ENCODE measurements at regions of chr5 and their contacts with region 1.

Region 1: GRCh38 chr5:138178516-138179276 is at the starts of genes BRD8 and KIF20A:
- DNase-seq: peak; percentile 95
- H3K4me3 ChIP-seq: peak within 1 kb of the TSS; percentile 88
- H3K27ac ChIP-seq: peak within 1 kb of the TSS; percentile 76
- H3K4me1 ChIP-seq: peaks cover 17% of the 10 kb centered on the region
- CTCF ChIP-seq: no peak
- total RNA-seq, gene BRD8: 57.7 and 71.7 TPM in 2 replicates
- total RNA-seq, gene KIF20A: 63.1 and 74.5 TPM in 2 replicates

Region 2: GRCh38 chr5:138132543-138132942 is 46.2 kb before region 1 on chr5:
- CTCF ChIA-PET with region 1: no interaction called
- POLR2A ChIA-PET with region 1: no interaction called
- intact Hi-C with region 1: no loop called
- DNase-seq: no peak
- H3K4me3 ChIP-seq: peak overlapping the region; percentile 42
- H3K27ac ChIP-seq: no peak overlapping the region
- H3K4me1 ChIP-seq: no peaks in the 10 kb centered on the region
- CTCF ChIP-seq: no peak

Region 3: GRCh38 chr5:138213161-138214029 is 34.7 kb after region 1 on chr5 and contains the start of gene CDC23:
- CTCF ChIA-PET with region 1: no interaction called
- POLR2A ChIA-PET with region 1: interaction called, 5 read pairs
- intact Hi-C with region 1: loop called (anchors 2 kb)
- DNase-seq: peak; percentile 98
- H3K4me3 ChIP-seq: peak within 1 kb of the TSS; percentile 97
- H3K27ac ChIP-seq: peak within 1 kb of the TSS; percentile 43
- H3K4me1 ChIP-seq: peaks cover 15% of the 10 kb centered on the region
- CTCF ChIP-seq: no peak
- total RNA-seq, gene CDC23: 31.8 and 46.7 TPM in 2 replicates

Region 4: GRCh38 chr5:138337685-138338410 is 159.2 kb after region 1 on chr5 and contains the start of gene FAM53C:
- CTCF ChIA-PET with region 1: no interaction called
- POLR2A ChIA-PET with region 1: interaction called, 5 read pairs
- intact Hi-C with region 1: loop called (anchors 5 kb)
- DNase-seq: peak; percentile 96
- H3K4me3 ChIP-seq: peak within 1 kb of the TSS; percentile 89
- H3K27ac ChIP-seq: peak within 1 kb of the TSS; percentile 67
- H3K4me1 ChIP-seq: peaks cover 26% of the 10 kb centered on the region
- CTCF ChIP-seq: 0 out of 2 replicates have a peak, but pooled peaks have one; percentile 23
- total RNA-seq, gene FAM53C: 38.4 and 42.3 TPM in 2 replicates

Region 5: DNA sequence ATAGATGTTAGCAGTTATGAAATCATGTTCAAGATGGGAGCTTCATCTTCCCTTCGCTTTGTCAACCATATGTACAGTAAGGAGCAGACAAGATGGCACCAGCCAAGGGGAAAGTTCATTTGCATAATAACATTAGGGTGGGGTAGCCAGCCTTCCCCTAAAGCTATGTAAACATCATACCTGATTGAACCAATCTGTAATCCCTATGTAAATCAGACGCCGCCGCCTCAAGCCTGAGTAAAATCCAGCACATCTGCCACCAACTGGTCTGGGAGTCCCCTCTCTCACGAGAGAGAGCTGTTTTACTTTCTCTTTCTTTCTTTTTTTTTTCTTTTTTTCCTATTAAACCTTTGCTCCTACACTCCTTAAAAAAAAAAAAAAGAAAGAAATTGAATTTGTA is 229.3 kb after region 1 on chr5:
- CTCF ChIA-PET with region 1: interaction called, 3 read pairs
- POLR2A ChIA-PET with region 1: no interaction called
- intact Hi-C with region 1: loop called (anchors 1 kb)
- DNase-seq: peak; percentile 4
- H3K4me3 ChIP-seq: no peak overlapping the region
- H3K27ac ChIP-seq: no peak overlapping the region
- H3K4me1 ChIP-seq: no peaks in the 10 kb centered on the region
- CTCF ChIP-seq: no peak

Region 6: DNA sequence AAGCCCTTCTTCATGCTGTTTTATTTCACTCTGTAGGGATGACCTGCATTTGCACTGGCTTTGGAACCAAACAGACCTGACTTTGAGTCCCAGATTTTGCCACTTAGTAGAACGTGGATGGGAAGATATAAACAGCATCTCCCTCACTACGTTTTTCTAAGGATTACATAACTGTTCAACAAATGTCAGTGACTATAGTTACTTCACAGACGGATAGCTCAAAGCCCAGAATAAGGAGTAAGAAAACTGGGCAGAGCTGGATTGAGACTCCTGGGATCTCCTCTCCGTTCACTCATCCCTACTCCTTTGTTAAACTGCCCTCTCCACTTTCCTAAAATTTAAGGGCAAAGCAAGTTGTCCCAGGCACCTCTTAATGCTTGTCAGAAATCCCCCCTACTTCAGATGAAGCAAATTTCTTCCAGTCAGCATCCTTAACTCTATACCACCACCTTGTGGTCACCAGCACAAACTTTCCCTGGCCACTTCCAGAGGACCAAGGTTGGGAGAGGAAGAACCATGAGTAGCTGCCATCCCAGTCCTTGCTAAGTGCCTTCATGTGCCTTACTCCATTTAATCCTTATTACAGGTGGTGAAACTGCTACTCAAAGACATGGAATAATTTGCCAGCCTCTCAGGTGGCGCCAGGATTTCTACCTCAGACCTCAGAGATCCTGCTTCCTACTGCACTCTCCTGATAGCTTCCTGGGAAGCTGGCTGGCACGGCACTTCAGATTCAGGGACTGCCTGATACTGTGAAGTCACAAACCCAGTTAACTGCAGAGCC is 325.0 kb after region 1 on chr5:
- CTCF ChIA-PET with region 1: no interaction called
- POLR2A ChIA-PET with region 1: no interaction called
- intact Hi-C with region 1: loop called (anchors 2 kb)
- DNase-seq: peak; percentile 68
- H3K4me3 ChIP-seq: no peak overlapping the region
- H3K27ac ChIP-seq: no peak overlapping the region
- H3K4me1 ChIP-seq: no peaks in the 10 kb centered on the region
- CTCF ChIP-seq: peak; percentile 87

Measured in OCI-LY7 (cell line).